Heart right ventricle (tissue), 16 donors: ENCODE measurements at regions of chr13 and their contacts with region 1.

Region 1: DNA sequence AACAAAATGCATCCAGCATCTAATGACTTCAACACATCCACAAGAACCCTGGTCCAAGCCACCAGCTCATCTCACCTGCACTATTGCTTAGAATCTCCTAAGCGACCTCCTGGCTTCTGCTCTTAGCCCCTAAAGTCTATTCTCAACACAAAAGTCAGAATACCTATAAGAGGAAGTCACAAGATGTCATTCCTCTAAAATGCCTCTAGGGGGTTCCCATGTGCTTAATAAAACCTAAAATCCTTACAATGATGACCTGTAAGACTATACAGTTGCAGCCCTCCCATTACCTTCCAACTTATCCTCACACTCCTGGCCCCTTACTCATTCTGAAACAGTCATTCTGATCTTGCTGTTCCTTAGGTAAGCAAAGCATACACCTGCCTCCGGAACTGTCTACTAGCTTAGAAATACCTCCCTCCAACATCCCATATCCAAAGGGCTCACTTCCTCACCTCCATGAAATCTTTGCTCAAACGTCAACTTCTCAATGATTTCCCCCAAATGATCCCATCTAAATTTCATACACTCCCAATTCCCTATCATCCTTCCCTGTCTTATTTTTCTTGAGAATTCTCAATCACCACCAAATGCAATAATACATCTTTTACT is 10.0 kb downstream of the ATP7B start:
- DNase-seq: no peak
- ATAC-seq: peak in 5 of 8 donors; percentile 29 to 68 (median 52)
- H3K4me3 ChIP-seq: no peak overlapping the region
- H3K27ac ChIP-seq: no peak overlapping the region
- H3K4me1 ChIP-seq: peaks cover 2 to 18% (median 11%) of the 10 kb centered on the region in 9 donors
- H3K27me3 ChIP-seq: no peaks in the 10 kb centered on the region
- CTCF ChIP-seq: peak; percentile 50 to 80 (median 75)

Region 2: DNA sequence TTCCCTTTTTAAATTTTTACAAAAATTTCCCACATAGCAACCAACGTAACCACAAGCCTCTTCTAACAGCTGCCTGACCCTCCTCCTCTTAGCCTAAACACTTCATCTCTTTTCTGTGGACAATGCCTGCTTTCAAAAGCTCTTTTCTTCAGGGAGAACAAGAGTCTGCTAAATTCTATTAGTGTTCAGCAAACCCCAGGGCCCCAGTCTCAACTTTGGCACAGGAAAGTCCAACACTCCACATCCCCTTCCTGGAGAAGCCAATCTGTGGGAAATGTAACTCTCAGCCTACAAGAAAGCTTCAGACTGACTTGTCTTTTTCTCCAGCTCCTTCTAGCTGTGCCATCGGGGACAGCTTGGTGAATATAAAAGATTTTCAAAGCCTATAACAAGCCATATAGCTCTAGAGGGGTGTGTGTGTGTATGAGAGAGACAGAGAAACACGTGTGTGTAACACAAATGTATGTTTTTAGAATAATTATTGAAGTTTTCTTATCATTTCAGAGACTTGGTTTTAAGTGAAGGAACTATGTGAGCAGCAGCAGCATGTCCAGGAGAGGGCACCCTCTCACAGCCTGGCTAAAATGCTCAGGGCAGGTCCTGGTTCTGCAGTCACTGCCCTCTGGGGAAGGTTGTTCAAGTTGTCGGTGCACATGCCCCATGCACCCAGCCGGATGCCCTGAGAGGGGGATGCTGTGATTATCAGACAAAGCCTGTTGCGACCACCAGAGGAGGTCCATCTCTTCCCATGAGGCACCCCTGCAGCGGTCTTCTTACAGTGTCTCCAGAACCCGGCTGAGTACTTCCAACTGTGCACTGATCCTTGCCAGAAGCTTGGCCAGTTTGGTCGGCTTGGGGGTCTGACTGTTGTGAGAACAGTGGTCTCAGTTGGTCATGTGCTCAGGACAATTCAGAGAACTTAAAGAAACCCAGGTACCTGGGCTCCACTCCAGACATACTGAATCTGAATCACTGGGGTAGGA is 105.0 kb before region 1 on chr13:
- intact Hi-C with region 1: loop called in 2 of 10 experiments (anchors 5 kb)
- DNase-seq: peak; percentile 36 to 43
- ATAC-seq: peak; percentile 78 to 92 (median 83)
- H3K4me3 ChIP-seq: no peak overlapping the region
- H3K27ac ChIP-seq: no peak overlapping the region
- H3K4me1 ChIP-seq: no peaks in the 10 kb centered on the region
- H3K27me3 ChIP-seq: no peaks in the 10 kb centered on the region
- CTCF ChIP-seq: peak; percentile 50 to 78 (median 69)

Region 3: GRCh38 chr13:52085421-52085820 is 84.2 kb after region 1 on chr13:
- intact Hi-C with region 1: no loop called
- DNase-seq: no peak
- ATAC-seq: no peak
- H3K4me3 ChIP-seq: no peak overlapping the region
- H3K27ac ChIP-seq: no peak overlapping the region
- H3K4me1 ChIP-seq: no peaks in the 10 kb centered on the region
- H3K27me3 ChIP-seq: no peaks in the 10 kb centered on the region
- CTCF ChIP-seq: no peak

Region 4: GRCh38 chr13:52371736-52372247 is 370.6 kb after region 1 on chr13:
- intact Hi-C with region 1: no loop called
- DNase-seq: no peak
- ATAC-seq: peak in 4 of 8 donors; percentile 48 to 76 (median 60)
- H3K4me3 ChIP-seq: no peak overlapping the region
- H3K27ac ChIP-seq: no peak overlapping the region
- H3K4me1 ChIP-seq: peaks cover 0 to 16% (median 0%) of the 10 kb centered on the region in 9 donors
- H3K27me3 ChIP-seq: no peaks in the 10 kb centered on the region
- CTCF ChIP-seq: no peak